ENCODE measurements at regions of chr3 and their contacts with region 1.

Region 1: GRCh38 chr3:177606891-177607290 is 409.6 kb upstream of the TBL1XR1 start:
- DNase-seq: peak; percentile 21 to 33
- H3K4me3 ChIP-seq: no peak overlapping the region
- H3K4me3 Mint-ChIP-seq: no peak overlapping the region
- H3K27ac Mint-ChIP-seq: peak overlapping the region; percentile 49
- H3K4me1 ChIP-seq: peaks cover 65% of the 10 kb centered on the region
- H3K4me1 Mint-ChIP-seq: peaks cover 40% of the 10 kb centered on the region
- H3K27me3 ChIP-seq: no peaks in the 10 kb centered on the region
- H3K27me3 Mint-ChIP-seq: no peaks in the 10 kb centered on the region
- CTCF ChIP-seq: no peak

Region 2: DNA sequence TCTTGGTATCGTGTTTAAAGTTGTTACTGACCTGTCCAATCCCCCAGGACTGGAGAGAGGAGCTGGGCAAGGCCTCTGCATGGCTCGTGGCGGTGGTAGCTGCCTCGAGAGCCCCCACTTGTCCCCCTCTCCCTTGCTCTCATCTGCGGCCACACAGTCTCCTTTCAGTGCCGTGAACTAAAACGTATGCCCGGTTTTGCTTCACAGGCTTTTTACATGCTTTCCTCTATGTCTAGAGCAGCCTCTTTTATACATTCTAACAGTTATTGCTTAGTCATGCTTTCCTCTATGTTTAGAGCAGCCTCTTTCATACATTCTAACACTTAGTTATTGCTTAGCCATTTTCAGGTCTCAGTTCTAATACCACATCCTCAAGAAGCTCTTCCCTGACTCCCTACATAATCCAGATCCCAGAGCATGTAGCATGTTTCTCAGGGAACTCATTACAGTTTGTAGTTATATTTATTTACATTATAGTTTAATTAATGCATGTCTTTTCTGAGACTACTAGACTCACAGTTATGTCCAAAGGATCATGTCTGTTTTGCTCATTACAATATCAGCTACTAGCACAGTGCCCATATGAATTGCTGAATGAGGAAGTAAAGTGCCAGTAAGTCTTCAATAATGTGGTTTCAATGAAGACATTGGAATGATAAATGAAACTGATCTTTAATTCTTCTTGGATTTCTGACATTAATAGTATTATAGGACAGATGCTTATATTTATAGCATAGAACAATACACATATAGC is 343.1 kb before region 1 on chr3:
- CTCF ChIA-PET with region 1: no interaction called
- POLR2A ChIA-PET with region 1: no interaction called
- intact Hi-C with region 1: loop called (anchors 5 kb)
- DNase-seq: no peak
- H3K4me3 ChIP-seq: no peak overlapping the region
- H3K4me3 Mint-ChIP-seq: no peak overlapping the region
- H3K27ac Mint-ChIP-seq: peak overlapping the region; percentile 83
- H3K4me1 ChIP-seq: peaks cover 6% of the 10 kb centered on the region; the same call in 1 of the 2 replicates
- H3K4me1 Mint-ChIP-seq: peaks cover 18% of the 10 kb centered on the region
- H3K27me3 ChIP-seq: no peaks in the 10 kb centered on the region
- H3K27me3 Mint-ChIP-seq: no peaks in the 10 kb centered on the region
- CTCF ChIP-seq: no peak

Region 3: DNA sequence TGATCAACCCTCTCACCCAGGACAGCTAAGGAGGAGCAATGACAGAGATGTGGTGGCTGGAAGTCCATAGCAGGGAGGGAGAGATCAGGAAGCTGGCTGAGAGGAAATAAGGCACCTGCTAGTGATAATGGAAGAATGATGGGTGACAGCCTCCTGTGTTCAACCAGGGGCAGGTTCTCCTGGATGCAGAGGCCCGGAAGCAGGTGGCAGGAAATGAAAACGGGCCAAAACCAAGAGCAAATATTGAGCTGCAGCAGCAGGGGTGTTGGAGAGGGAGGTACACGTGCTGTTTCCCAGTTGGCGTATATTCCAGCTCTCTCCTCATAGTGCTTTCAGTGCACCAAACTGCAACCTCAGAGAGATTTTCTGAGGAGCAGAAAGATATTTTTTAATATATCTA is 196.2 kb before region 1 on chr3:
- CTCF ChIA-PET with region 1: no interaction called
- POLR2A ChIA-PET with region 1: no interaction called
- intact Hi-C with region 1: no loop called
- DNase-seq: no peak
- H3K4me3 ChIP-seq: no peak overlapping the region
- H3K4me3 Mint-ChIP-seq: no peak overlapping the region
- H3K27ac Mint-ChIP-seq: no peak overlapping the region
- H3K4me1 ChIP-seq: no peaks in the 10 kb centered on the region
- H3K4me1 Mint-ChIP-seq: peaks cover 7% of the 10 kb centered on the region
- H3K27me3 ChIP-seq: no peaks in the 10 kb centered on the region; the same call in 1 of the 2 replicates
- H3K27me3 Mint-ChIP-seq: no peaks in the 10 kb centered on the region
- CTCF ChIP-seq: no peak

Region 4: DNA sequence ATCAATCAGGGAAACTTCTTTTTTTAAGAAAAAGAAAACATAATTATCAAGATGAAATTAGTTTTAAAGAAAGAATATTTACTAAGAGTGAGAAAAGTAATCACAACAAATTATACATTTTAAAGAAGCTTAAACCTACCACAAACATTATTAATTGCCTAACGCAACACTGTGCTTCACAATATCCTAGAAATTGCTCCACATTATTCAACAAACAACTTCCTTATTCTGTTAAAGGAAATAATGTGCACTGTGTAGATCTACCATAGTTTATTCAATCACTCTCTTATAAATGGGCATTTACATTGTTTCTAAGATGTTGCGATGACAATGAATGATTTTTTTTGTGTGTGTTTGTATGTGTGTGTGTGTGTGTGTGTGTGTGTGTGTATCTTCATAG is 403.4 kb after region 1 on chr3:
- CTCF ChIA-PET with region 1: no interaction called
- POLR2A ChIA-PET with region 1: no interaction called
- intact Hi-C with region 1: no loop called
- DNase-seq: no peak
- H3K4me3 ChIP-seq: no peak overlapping the region
- H3K4me3 Mint-ChIP-seq: no peak overlapping the region
- H3K27ac Mint-ChIP-seq: no peak overlapping the region
- H3K4me1 ChIP-seq: no peaks in the 10 kb centered on the region
- H3K4me1 Mint-ChIP-seq: no peaks in the 10 kb centered on the region
- H3K27me3 ChIP-seq: no peaks in the 10 kb centered on the region
- H3K27me3 Mint-ChIP-seq: no peaks in the 10 kb centered on the region
- CTCF ChIP-seq: no peak